ENCODE measurements at regions of chr7 and their contacts with region 1.

Region 1: GRCh38 chr7:141370178-141370577 is 181.0 kb upstream of the AGK start:
- DNase-seq: no peak
- H3K4me3 ChIP-seq: no peak overlapping the region
- H3K27ac ChIP-seq: no peak overlapping the region
- H3K4me1 ChIP-seq: no peaks in the 10 kb centered on the region
- H3K27me3 ChIP-seq: no peaks in the 10 kb centered on the region
- CTCF ChIP-seq: no peak
- POLR2A ChIP-seq: no peak

Region 2: GRCh38 chr7:141351175-141351574 is 19.0 kb before region 1 on chr7:
- intact Hi-C with region 1: loop called (anchors 2 kb)
- DNase-seq: no peak
- H3K4me3 ChIP-seq: no peak overlapping the region
- H3K27ac ChIP-seq: no peak overlapping the region
- H3K4me1 ChIP-seq: no peaks in the 10 kb centered on the region
- H3K27me3 ChIP-seq: no peaks in the 10 kb centered on the region
- CTCF ChIP-seq: no peak
- POLR2A ChIP-seq: no peak

Region 3: DNA sequence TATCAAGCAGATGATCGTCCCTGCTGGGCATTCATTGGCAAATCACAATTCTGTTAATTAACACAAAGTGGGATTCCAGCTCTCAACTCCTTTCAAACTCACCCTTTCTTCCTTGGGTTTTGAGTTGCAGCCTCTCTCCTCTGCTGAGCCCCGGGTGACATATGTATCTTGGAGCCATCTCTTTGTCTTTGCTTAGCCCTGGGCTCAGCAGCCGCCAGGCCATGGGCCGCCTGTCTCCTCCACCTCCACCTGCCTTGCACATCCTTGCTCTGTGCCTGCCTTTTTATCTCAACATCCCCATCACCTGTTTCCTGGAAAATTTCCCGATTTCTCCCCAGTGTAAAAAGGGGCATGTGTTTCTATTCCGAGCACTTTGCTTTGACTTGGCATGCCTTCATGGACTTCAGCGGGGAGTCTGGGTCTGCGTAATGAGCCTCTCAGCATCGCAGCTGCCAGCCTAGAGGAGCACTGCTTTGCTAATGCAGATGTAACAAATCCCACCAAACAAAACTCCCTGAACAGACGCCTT is 39.7 kb after region 1 on chr7:
- intact Hi-C with region 1: no loop called
- DNase-seq: no peak
- H3K4me3 ChIP-seq: no peak overlapping the region
- H3K27ac ChIP-seq: no peak overlapping the region
- H3K4me1 ChIP-seq: no peaks in the 10 kb centered on the region
- H3K27me3 ChIP-seq: no peaks in the 10 kb centered on the region
- CTCF ChIP-seq: no peak
- POLR2A ChIP-seq: no peak

Measured in vagina (tissue), 2 donors.